ENCODE measurements at regions of chr11 and their contacts with region 1.

Region 1: GRCh38 chr11:76235233-76236091 is 29.2 kb upstream of the WNT11 start:
- DNase-seq: peak; percentile 94
- H3K4me3 ChIP-seq: peak overlapping the region; percentile 79
- H3K27ac ChIP-seq: peak overlapping the region; percentile 69
- H3K4me1 ChIP-seq: peaks cover 33% of the 10 kb centered on the region
- CTCF ChIP-seq: no peak

Region 2: GRCh38 chr11:76380967-76381719 is 145.7 kb after region 1 on chr11 and contains the starts of genes GVQW3 and THAP12:
- CTCF ChIA-PET with region 1: no interaction called
- POLR2A ChIA-PET with region 1: interaction called, 3 read pairs
- intact Hi-C with region 1: loop called (anchors 1 kb)
- DNase-seq: peak; percentile 98
- H3K4me3 ChIP-seq: peak within 1 kb of the TSS; percentile 94
- H3K27ac ChIP-seq: peak within 1 kb of the TSS; percentile 59
- H3K4me1 ChIP-seq: peaks cover 54% of the 10 kb centered on the region
- CTCF ChIP-seq: peak; percentile 30
- total RNA-seq, gene GVQW3: 14.4 and 15.4 TPM in 2 replicates
- total RNA-seq, gene THAP12: 52.5 and 55.7 TPM in 2 replicates

Region 3: GRCh38 chr11:76444384-76445123 is 209.1 kb after region 1 on chr11 and contains the start of gene EMSY:
- CTCF ChIA-PET with region 1: no interaction called
- POLR2A ChIA-PET with region 1: no interaction called
- intact Hi-C with region 1: loop called (anchors 1 kb)
- DNase-seq: peak; percentile 97
- H3K4me3 ChIP-seq: peak within 1 kb of the TSS; percentile 99
- H3K27ac ChIP-seq: peak within 1 kb of the TSS; percentile 64
- H3K4me1 ChIP-seq: peaks cover 19% of the 10 kb centered on the region
- CTCF ChIP-seq: no peak
- total RNA-seq, gene EMSY: 26.3 and 45.5 TPM in 2 replicates

Region 4: DNA sequence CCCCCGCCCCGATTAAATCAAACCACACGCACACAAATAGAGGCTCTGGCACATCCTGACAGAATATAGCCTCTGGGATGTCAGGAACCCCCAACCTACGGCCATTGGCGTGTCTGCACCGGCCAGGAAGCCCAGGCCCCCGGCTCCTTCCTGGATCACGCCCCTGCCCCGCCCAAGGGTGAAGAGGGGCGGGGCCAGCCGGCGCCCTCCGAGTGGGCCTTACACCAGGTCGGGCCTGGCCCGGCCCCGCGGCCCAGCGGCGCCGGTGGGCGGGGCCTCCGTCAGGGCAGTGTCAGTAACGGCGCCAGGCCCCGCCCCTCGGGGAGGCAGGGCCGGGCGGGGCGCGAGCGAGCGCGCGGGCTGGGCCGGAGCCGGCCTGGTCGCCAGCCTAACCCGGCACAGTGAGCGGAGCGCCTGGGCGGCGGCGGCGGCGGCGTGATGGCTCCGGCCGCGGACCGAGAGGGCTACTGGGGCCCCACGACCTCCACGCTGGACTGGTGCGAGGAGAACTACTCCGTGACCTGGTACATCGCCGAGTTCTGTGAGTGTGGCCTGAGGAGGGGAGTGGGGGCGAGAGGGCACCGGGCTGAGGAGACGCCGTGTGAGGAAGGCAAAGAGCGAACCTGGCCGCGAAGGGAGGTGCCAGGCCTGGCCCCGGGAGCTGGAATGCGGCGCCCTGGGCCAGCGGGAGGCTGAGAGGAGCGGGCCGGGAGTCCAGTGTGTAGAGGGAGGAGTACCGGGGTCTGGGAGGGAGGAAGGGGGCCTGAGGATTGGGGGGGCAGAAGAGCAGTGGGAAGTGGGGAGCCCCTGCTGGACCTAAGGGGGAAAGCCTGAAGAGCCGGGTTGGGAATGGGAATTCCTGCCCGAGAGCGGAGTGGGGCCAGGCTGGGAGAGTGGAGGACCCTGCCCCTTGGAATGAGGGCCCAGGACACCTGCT is 625.3 kb after region 1 on chr11 and contains the start of gene ACER3:
- CTCF ChIA-PET with region 1: no interaction called
- POLR2A ChIA-PET with region 1: no interaction called
- intact Hi-C with region 1: loop called (anchors 1 kb)
- DNase-seq: peak; percentile 97
- H3K4me3 ChIP-seq: peak within 1 kb of the TSS; percentile 72
- H3K27ac ChIP-seq: no peak within 1 kb of the TSS
- H3K4me1 ChIP-seq: peaks cover 14% of the 10 kb centered on the region
- CTCF ChIP-seq: no peak
- total RNA-seq, gene ACER3: 3.0 and 3.8 TPM in 2 replicates

Measured in OCI-LY7 (cell line).